ENCODE measurements at regions of chr4 and their contacts with region 1.

Region 1: DNA sequence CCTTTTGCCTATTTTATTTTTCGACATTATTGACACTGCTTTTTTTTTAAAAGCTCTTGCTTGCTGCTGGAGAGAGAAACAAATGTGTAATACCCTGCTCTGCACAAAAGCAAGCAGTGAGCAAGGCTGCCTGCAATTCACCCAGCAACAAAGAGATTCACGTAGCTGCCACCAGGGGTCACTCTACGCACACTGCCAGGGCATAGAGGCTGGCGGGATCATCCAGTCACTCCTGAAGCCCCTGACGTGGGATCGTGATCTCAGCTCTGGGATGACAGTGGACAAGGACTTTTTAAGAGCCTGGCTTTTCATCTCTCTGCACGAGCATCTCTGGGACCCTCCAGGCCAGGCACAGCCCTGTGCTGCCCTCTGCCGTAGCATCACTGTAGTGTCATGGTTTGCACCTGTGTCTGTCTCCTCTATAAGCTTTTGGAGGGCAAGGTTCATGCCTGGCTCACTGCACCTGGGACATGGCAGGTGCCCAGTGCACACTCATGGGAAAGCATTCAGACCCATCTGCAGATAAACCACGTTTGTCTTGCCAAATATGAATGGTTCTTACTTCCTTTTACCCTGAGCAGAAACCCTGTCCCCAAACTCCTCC is 19.8 kb downstream of the C4orf50 start:
- DNase-seq: peak; percentile 66
- ATAC-seq: peak; percentile 44
- H3K4me3 Mint-ChIP-seq: no peak overlapping the region
- H3K27ac Mint-ChIP-seq: no peak overlapping the region
- H3K4me1 Mint-ChIP-seq: peaks cover 2% of the 10 kb centered on the region
- H3K27me3 Mint-ChIP-seq: peaks cover 13% of the 10 kb centered on the region

Region 2: GRCh38 chr4:5979976-5980375 is 18.5 kb before region 1 on chr4:
- CTCF ChIA-PET with region 1: interaction called, 14 read pairs
- POLR2A ChIA-PET with region 1: no interaction called
- intact Hi-C with region 1: no loop called
- DNase-seq: peak; percentile 29
- ATAC-seq: no peak
- H3K4me3 Mint-ChIP-seq: no peak overlapping the region
- H3K27ac Mint-ChIP-seq: no peak overlapping the region
- H3K4me1 Mint-ChIP-seq: no peaks in the 10 kb centered on the region
- H3K27me3 Mint-ChIP-seq: peaks cover 23% of the 10 kb centered on the region

Region 3: GRCh38 chr4:6087673-6088341 is 89.4 kb after region 1 on chr4:
- CTCF ChIA-PET with region 1: interaction called, 4 read pairs
- POLR2A ChIA-PET with region 1: no interaction called
- intact Hi-C with region 1: loop called in 1 of 2 experiments (anchors 5 kb)
- DNase-seq: no peak
- ATAC-seq: no peak
- H3K4me3 Mint-ChIP-seq: no peak overlapping the region
- H3K27ac Mint-ChIP-seq: no peak overlapping the region
- H3K4me1 Mint-ChIP-seq: no peaks in the 10 kb centered on the region
- H3K27me3 Mint-ChIP-seq: peaks cover 2% of the 10 kb centered on the region

Region 4: GRCh38 chr4:6200011-6200921 is 201.8 kb after region 1 on chr4 and contains the start of gene JAKMIP1:
- CTCF ChIA-PET with region 1: no interaction called
- POLR2A ChIA-PET with region 1: no interaction called
- intact Hi-C with region 1: no loop called
- DNase-seq: peak; percentile 92
- ATAC-seq: peak; percentile 83
- H3K4me3 Mint-ChIP-seq: peak within 1 kb of the TSS; percentile 68
- H3K27ac Mint-ChIP-seq: no peak within 1 kb of the TSS
- H3K4me1 Mint-ChIP-seq: peaks cover 26% of the 10 kb centered on the region
- H3K27me3 Mint-ChIP-seq: peaks cover 42% of the 10 kb centered on the region
- total RNA-seq, gene JAKMIP1: 3.1 to 3.9 TPM